Activated CD4-positive, alpha-beta memory T cell treated with anti-CD3 and anti-CD28 coated beads, Interleukin-2, amount 10 ng/mL, durations not matched to agents 7 days and 5 days (primary cell): ENCODE measurements at regions of chr22 and their contacts with region 1.

Region 1: GRCh38 chr22:22207845-22208564 is 36.6 kb upstream of the VPREB1 start:
- DNase-seq: peak; percentile 89
- H3K4me3 Mint-ChIP-seq: peak overlapping the region; percentile 12
- H3K27ac Mint-ChIP-seq: peak overlapping the region; percentile 66
- H3K4me1 Mint-ChIP-seq: peaks cover 42% of the 10 kb centered on the region
- H3K27me3 Mint-ChIP-seq: no peaks in the 10 kb centered on the region

Region 2: DNA sequence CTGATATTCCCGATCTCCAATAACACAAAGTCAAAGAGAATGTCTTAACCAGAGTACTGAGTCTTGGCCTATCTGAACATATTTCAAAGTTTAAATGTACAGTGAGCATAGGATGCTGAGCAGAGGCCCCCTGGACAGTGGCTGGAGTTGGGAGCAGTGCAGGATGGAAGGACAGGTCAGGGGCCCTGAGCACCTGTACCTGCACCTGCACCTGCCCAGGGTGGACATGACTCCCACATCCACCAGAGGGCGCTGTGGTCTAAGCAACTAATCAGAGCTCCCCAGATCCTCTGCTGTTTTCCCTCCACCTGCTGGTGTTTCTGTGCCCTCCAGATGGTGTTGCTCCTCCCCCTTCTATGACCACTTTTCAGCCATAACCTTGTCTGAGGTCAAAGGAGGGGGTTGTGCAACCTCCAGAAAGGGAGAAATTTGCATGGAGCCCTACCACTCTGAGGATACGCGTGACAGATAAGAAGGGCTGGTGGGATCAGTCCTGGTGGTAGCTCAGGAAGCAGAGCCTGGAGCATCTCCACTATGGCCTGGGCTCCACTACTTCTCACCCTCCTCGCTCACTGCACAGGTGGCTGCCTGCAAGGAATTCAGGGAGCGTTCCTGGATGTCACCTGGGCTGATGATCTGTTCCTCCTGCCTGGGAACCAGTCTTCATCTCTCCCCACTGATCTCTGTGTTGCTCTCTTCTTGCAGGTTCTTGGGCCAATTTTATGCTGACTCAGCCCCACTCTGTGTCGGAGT is 12.6 kb before region 1 on chr22:
- CTCF ChIA-PET with region 1: interaction called, 10 read pairs
- POLR2A ChIA-PET with region 1: no interaction called
- DNase-seq: peak; percentile 82
- H3K4me3 Mint-ChIP-seq: no peak overlapping the region
- H3K27ac Mint-ChIP-seq: no peak overlapping the region
- H3K4me1 Mint-ChIP-seq: no peaks in the 10 kb centered on the region
- H3K27me3 Mint-ChIP-seq: peaks cover 35% of the 10 kb centered on the region

Region 3: GRCh38 chr22:22322792-22323191 is 114.8 kb after region 1 on chr22:
- CTCF ChIA-PET with region 1: interaction called, 10 read pairs
- POLR2A ChIA-PET with region 1: no interaction called
- DNase-seq: no peak
- H3K4me3 Mint-ChIP-seq: no peak overlapping the region
- H3K27ac Mint-ChIP-seq: no peak overlapping the region
- H3K4me1 Mint-ChIP-seq: no peaks in the 10 kb centered on the region
- H3K27me3 Mint-ChIP-seq: no peaks in the 10 kb centered on the region

Region 4: GRCh38 chr22:22380098-22381030 is 172.4 kb after region 1 on chr22:
- CTCF ChIA-PET with region 1: no interaction called
- POLR2A ChIA-PET with region 1: no interaction called
- DNase-seq: no peak
- H3K4me3 Mint-ChIP-seq: no peak overlapping the region
- H3K27ac Mint-ChIP-seq: no peak overlapping the region
- H3K4me1 Mint-ChIP-seq: no peaks in the 10 kb centered on the region
- H3K27me3 Mint-ChIP-seq: peaks cover 48% of the 10 kb centered on the region